Caco-2 (cell line): ENCODE measurements at regions of chr4 and their contacts with region 1.

Region 1: DNA sequence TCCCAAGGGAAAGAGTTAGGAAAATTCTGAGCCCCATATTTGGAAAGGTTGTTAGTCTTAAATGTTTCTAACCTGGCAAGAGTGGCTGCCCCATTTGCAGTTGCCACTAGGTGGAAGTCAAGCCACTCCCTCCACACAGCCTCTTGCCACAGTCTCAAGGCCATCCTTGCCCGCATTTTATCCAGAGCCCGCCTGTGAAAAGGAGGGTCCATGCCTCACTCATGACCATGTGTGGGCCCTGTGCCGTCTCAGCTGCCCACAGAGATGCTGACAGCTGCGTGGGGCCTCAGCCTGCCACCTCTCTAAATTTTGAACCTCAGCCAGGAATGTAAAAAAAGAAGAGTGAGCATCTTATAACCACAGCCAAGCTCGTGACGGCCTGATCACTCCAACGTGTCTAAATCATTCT is 201.5 kb upstream of the FAM241A start:
- DNase-seq: peak; percentile 32 to 40
- H3K4me3 ChIP-seq: no peak overlapping the region
- H3K4me3 Mint-ChIP-seq: no peak overlapping the region
- H3K27ac Mint-ChIP-seq: no peak overlapping the region
- H3K4me1 ChIP-seq: no peaks in the 10 kb centered on the region
- H3K4me1 Mint-ChIP-seq: no peaks in the 10 kb centered on the region
- H3K27me3 ChIP-seq: no peaks in the 10 kb centered on the region
- H3K27me3 Mint-ChIP-seq: no peaks in the 10 kb centered on the region
- CTCF ChIP-seq: peak; percentile 52 to 54

Region 2: DNA sequence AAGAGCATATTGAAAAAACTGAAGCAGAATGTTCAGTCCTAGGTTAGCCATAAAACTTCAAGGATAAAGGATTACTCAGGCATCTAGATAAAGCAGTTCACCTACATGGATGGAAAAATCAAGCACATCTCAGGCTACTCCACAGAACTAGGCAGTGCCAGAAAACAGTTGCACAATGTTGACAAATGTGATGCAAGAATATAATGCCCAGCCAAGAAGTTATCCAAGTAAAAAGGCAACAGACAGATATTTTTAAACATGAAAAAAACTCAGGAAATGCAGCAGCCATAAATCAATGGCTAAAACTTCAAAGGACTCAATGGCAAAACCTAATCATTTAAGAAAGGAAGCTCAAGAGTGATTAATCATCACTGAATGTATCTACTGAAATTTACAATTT is 254.6 kb before region 1 on chr4:
- CTCF ChIA-PET with region 1: no interaction called
- POLR2A ChIA-PET with region 1: no interaction called
- intact Hi-C with region 1: no loop called
- DNase-seq: no peak
- H3K4me3 ChIP-seq: no peak overlapping the region
- H3K4me3 Mint-ChIP-seq: no peak overlapping the region
- H3K27ac Mint-ChIP-seq: no peak overlapping the region
- H3K4me1 ChIP-seq: no peaks in the 10 kb centered on the region
- H3K4me1 Mint-ChIP-seq: no peaks in the 10 kb centered on the region
- H3K27me3 ChIP-seq: no peaks in the 10 kb centered on the region
- H3K27me3 Mint-ChIP-seq: peaks cover 6% of the 10 kb centered on the region
- CTCF ChIP-seq: no peak

Region 3: GRCh38 chr4:111923786-111924185 is 20.0 kb before region 1 on chr4:
- CTCF ChIA-PET with region 1: no interaction called
- POLR2A ChIA-PET with region 1: no interaction called
- intact Hi-C with region 1: no loop called
- DNase-seq: no peak
- H3K4me3 ChIP-seq: no peak overlapping the region
- H3K4me3 Mint-ChIP-seq: no peak overlapping the region
- H3K27ac Mint-ChIP-seq: no peak overlapping the region
- H3K4me1 ChIP-seq: no peaks in the 10 kb centered on the region
- H3K4me1 Mint-ChIP-seq: no peaks in the 10 kb centered on the region
- H3K27me3 ChIP-seq: no peaks in the 10 kb centered on the region
- H3K27me3 Mint-ChIP-seq: no peaks in the 10 kb centered on the region
- CTCF ChIP-seq: no peak

Region 4: DNA sequence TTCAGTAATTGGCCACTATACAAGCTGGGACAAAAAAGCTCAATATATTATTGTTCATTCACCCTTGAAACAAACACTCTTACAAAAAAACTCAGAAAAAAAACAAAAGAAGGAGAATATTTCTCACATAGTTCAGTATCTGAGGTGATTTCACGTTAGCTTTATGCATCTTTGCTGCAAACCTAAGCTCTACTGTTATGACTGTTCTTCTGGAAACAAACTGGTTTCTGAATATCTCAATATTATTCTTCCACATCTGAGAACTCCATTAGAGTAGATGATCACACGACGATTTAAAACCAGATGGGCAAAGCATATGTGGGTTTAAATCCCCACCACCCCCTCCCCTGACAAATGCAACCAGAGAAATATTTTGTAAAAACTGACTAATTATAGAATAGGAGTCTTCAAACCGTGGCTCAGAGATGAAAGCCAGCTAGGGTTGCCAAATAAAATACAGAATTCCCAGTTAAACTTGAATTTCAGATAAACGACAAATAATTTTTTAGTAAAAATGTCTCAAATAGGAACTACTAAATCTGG is 19.4 kb after region 1 on chr4:
- CTCF ChIA-PET with region 1: no interaction called
- POLR2A ChIA-PET with region 1: no interaction called
- intact Hi-C with region 1: loop called (anchors 1 kb)
- DNase-seq: no peak
- H3K4me3 ChIP-seq: no peak overlapping the region
- H3K4me3 Mint-ChIP-seq: no peak overlapping the region
- H3K27ac Mint-ChIP-seq: no peak overlapping the region
- H3K4me1 ChIP-seq: no peaks in the 10 kb centered on the region
- H3K4me1 Mint-ChIP-seq: no peaks in the 10 kb centered on the region
- H3K27me3 ChIP-seq: no peaks in the 10 kb centered on the region; the same call in 1 of the 2 replicates
- H3K27me3 Mint-ChIP-seq: no peaks in the 10 kb centered on the region
- CTCF ChIP-seq: no peak

Region 5: GRCh38 chr4:112060212-112060611 is 116.4 kb after region 1 on chr4:
- CTCF ChIA-PET with region 1: no interaction called
- POLR2A ChIA-PET with region 1: no interaction called
- intact Hi-C with region 1: loop called (anchors 1 kb)
- DNase-seq: peak in 1 of 2 experiments; percentile 13
- H3K4me3 ChIP-seq: no peak overlapping the region
- H3K4me3 Mint-ChIP-seq: no peak overlapping the region
- H3K27ac Mint-ChIP-seq: no peak overlapping the region
- H3K4me1 ChIP-seq: no peaks in the 10 kb centered on the region
- H3K4me1 Mint-ChIP-seq: no peaks in the 10 kb centered on the region
- H3K27me3 ChIP-seq: no peaks in the 10 kb centered on the region
- H3K27me3 Mint-ChIP-seq: peaks cover 7% of the 10 kb centered on the region
- CTCF ChIP-seq: peak; percentile 24 to 40